ENCODE measurements at regions of chr12 and their contacts with region 1.

Region 1: DNA sequence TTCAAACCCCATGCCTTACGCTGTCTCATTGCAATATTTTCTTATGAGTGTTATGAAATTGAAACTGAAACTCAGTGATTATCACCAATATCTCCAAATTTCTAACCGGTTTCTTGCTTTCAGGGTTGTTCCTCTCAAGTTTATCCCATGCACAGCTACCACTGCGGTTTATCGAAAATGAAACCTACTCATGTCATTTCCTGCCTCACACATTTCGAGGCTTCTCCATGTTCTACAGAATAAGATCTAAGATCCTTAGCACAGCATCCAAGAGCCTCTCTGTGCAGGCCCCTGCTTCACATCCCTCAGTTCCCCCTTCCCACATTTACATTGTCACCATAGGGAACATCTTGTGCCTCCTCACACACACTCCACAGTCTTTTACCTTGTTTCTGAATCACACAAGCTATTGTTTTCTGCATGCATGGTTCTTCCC is 45.5 kb upstream of the FAR2 start:
- DNase-seq: peak; percentile 64
- H3K4me3 Mint-ChIP-seq: no peak overlapping the region
- H3K27ac Mint-ChIP-seq: no peak overlapping the region
- H3K4me1 Mint-ChIP-seq: peaks cover 31% of the 10 kb centered on the region
- H3K27me3 Mint-ChIP-seq: no peaks in the 10 kb centered on the region

Region 2: GRCh38 chr12:28065889-28066630 is 1037.5 kb before region 1 on chr12:
- CTCF ChIA-PET with region 1: no interaction called
- intact Hi-C with region 1: loop called (anchors 5 kb)
- DNase-seq: peak; percentile 17
- H3K4me3 Mint-ChIP-seq: no peak overlapping the region
- H3K27ac Mint-ChIP-seq: no peak overlapping the region
- H3K4me1 Mint-ChIP-seq: peaks cover 18% of the 10 kb centered on the region
- H3K27me3 Mint-ChIP-seq: peaks cover 6% of the 10 kb centered on the region

Region 3: DNA sequence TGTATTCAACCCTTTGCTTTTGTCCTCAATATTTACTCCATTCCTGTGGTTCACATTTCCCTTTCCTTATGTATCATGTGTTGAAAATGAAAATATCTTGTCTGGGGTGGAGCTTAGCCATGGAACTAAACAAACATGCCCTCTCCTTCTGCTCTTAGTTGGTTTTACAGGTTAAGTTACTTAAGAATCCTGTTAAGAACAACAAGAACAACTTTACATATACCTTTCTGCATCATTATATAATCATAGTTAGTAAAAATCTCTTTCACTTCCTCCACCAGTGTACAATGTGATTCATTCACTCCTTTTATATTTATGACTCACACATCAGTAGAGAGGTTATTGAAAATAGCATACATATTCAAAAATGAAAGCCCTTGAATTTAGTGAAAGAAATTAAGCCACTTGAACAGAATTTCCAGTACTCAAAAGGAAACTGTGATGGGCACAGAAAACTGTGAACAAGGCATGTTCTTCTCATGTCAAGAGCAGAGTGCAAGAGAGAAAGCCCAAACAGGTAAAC is 605.6 kb before region 1 on chr12:
- CTCF ChIA-PET with region 1: no interaction called
- intact Hi-C with region 1: loop called (anchors 5 kb)
- DNase-seq: peak; percentile 10
- H3K4me3 Mint-ChIP-seq: no peak overlapping the region
- H3K27ac Mint-ChIP-seq: peak overlapping the region; percentile 46
- H3K4me1 Mint-ChIP-seq: peaks cover 18% of the 10 kb centered on the region
- H3K27me3 Mint-ChIP-seq: no peaks in the 10 kb centered on the region

Region 4: GRCh38 chr12:29082522-29082921 is 21.0 kb before region 1 on chr12:
- CTCF ChIA-PET with region 1: interaction called, 3 read pairs
- intact Hi-C with region 1: loop called (anchors 1 kb)
- DNase-seq: no peak
- H3K4me3 Mint-ChIP-seq: no peak overlapping the region
- H3K27ac Mint-ChIP-seq: no peak overlapping the region
- H3K4me1 Mint-ChIP-seq: peaks cover 7% of the 10 kb centered on the region
- H3K27me3 Mint-ChIP-seq: peaks cover 9% of the 10 kb centered on the region

Region 5: DNA sequence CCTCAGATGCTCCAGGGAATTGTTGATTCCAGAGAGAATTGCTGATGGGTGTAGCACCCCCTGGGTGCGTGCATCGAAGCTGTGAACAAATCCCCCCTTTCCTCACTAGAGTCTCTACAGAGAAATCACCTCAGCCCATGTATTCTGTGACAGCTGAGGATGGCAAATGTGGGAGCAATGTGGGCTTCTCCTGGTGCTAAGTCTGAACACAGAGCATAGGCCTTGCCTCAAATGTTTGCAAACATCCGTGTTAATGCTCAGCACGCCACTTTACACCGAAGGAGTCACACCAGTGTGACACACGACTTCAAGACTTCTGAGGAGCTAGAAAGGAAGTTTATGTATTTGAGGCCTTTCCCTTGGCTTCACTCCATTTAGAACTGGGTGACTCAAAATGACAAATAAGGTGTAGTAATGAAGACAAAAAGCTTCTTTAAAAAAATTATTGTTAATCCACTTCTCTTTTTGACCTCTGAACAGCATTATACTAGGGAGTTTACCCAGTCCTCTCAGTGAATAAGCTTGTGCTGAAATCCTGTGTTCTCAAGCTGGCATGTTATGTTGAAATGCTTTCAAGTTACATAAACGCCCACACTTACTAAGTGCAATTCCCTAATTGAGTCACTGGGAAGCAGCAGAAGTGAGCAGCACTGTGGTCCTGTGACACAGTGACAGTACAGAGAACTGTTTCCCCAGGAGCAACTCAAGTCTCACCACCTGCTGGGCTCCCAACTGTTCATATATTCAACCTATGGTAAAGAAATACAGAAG is 138.4 kb after region 1 on chr12:
- CTCF ChIA-PET with region 1: no interaction called
- intact Hi-C with region 1: loop called (anchors 1 kb)
- DNase-seq: peak; percentile 54
- H3K4me3 Mint-ChIP-seq: no peak overlapping the region
- H3K27ac Mint-ChIP-seq: no peak overlapping the region
- H3K4me1 Mint-ChIP-seq: peaks cover 16% of the 10 kb centered on the region
- H3K27me3 Mint-ChIP-seq: no peaks in the 10 kb centered on the region

Region 6: DNA sequence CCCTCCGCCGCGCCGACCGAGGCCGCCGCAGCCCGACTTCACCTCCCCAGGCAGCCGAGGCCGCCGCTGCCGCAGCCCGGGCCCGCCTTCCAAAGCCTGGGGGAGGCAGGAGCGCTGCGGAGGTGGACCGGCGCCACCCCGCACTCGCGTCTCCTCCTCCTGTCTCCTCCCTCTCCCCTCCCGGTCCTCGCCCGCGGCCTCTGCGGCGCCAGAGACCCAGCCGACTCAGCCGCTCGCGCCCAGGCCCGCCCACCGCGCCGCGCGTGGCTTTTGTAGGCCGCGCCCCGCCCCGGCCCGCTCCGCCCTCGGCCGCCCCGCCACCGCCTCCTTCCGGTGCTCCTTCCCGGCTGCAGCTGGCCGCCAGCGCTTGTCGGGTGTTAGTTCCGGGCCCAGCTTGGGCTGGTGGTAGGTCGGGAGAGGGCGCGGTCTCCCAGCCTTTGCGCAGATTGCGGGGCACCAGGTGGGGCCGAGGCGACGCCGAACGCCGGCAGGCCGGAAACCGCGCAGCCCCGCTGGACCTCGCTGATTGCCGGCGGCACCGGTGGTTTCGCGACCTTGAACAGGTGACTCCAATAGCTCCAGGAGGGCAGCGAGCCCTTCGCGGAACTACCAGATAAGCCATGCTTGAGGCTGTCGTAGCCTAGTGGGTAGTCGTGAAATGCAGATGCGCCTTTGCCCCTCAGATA is 1651.3 kb after region 1 on chr12 and contains the start of gene CAPRIN2:
- CTCF ChIA-PET with region 1: no interaction called
- intact Hi-C with region 1: loop called (anchors 10 kb)
- DNase-seq: peak; percentile 95
- H3K4me3 Mint-ChIP-seq: peak within 1 kb of the TSS; percentile 94
- H3K27ac Mint-ChIP-seq: peak within 1 kb of the TSS; percentile 51
- H3K4me1 Mint-ChIP-seq: peaks cover 38% of the 10 kb centered on the region
- H3K27me3 Mint-ChIP-seq: no peaks in the 10 kb centered on the region
- total RNA-seq, gene CAPRIN2: 10.3 to 11.3 TPM